HEK293 (cell line): ENCODE measurements at regions of chr1 and their contacts with region 1.

Region 1: DNA sequence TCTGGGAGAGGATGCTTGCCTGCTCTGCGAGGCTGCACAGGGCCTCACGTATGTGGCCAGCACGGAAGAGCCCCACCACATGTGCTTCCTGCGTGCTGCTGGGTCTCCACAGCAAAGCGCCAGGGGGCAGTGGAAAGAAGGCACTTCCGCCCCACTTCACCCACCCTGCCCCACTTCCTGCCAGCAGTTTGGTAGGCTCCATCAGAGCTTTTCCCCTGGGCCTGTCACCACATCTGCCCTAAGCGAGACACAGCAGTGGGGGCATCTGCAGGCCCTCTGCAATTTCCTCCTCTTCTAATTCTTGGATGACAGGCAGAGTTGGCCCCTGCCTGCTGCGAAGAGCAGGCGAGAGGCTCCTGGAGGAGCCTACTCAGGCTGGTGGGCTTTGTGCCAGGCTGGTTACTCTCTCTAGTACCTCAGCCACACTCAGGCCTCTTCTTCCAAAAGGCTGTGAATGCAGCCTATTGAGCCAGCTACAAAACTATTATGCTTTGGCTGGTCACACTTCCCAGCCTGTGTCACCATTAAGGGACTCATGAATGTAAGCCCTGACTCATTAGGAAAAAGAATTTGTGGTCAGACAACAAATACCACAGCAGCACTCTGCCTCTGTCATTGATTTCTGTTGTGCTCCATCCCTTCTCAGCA is 25.0 kb downstream of the CD244 start:
- H3K4me3 ChIP-seq: no peak overlapping the region
- H3K27ac ChIP-seq: no peak overlapping the region
- H3K4me1 ChIP-seq: no peaks in the 10 kb centered on the region
- CTCF ChIP-seq: no peak

Region 2: GRCh38 chr1:160681067-160681890 is 156.4 kb before region 1 on chr1:
- CTCF ChIA-PET with region 1: interaction called, 11 read pairs
- POLR2A ChIA-PET with region 1: no interaction called
- H3K4me3 ChIP-seq: no peak overlapping the region
- H3K27ac ChIP-seq: no peak overlapping the region
- H3K4me1 ChIP-seq: no peaks in the 10 kb centered on the region
- CTCF ChIP-seq: no peak

Region 3: DNA sequence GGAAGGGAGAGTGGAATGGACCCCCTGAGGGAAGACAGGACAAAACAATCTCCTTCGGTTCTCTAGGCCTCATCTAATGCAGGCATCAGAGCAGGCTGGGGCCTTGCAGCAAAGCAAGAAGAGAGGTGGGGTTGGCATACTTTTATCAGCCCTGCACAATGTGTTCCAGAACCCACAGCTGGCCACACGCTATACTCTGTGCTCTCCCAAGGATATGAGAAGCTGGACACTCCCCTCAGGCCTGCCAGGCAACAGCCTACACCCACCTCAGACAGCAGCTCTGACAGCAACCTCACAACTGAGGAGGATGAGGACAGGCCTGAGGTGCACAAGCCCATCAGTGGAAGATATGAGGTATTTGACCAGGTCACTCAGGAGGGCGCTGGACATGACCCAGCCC is 14.4 kb before region 1 on chr1:
- CTCF ChIA-PET with region 1: interaction called, 10 read pairs
- POLR2A ChIA-PET with region 1: no interaction called
- H3K4me3 ChIP-seq: no peak overlapping the region
- H3K27ac ChIP-seq: no peak overlapping the region
- H3K4me1 ChIP-seq: no peaks in the 10 kb centered on the region
- CTCF ChIP-seq: no peak